ENCODE measurements at regions of chr3 and their contacts with region 1.

Region 1: GRCh38 chr3:196432137-196432879 is at the start of gene UBXN7:
- DNase-seq: peak; percentile 96 to 99
- ATAC-seq: peak; percentile 98
- H3K4me3 ChIP-seq: peak within 1 kb of the TSS; percentile 70 to 78
- H3K27ac ChIP-seq: peak within 1 kb of the TSS; percentile 60 to 69
- H3K4me1 ChIP-seq: no peaks in the 10 kb centered on the region
- H3K27me3 ChIP-seq: no peaks in the 10 kb centered on the region
- total RNA-seq, gene UBXN7: 40.4 to 57.1 TPM

Region 2: GRCh38 chr3:196388956-196389355 is 43.4 kb before region 1 on chr3:
- intact Hi-C with region 1: no loop called
- DNase-seq: no peak
- ATAC-seq: no peak
- H3K4me3 ChIP-seq: no peak overlapping the region
- H3K27ac ChIP-seq: no peak overlapping the region
- H3K4me1 ChIP-seq: no peaks in the 10 kb centered on the region
- H3K27me3 ChIP-seq: no peaks in the 10 kb centered on the region

Region 3: DNA sequence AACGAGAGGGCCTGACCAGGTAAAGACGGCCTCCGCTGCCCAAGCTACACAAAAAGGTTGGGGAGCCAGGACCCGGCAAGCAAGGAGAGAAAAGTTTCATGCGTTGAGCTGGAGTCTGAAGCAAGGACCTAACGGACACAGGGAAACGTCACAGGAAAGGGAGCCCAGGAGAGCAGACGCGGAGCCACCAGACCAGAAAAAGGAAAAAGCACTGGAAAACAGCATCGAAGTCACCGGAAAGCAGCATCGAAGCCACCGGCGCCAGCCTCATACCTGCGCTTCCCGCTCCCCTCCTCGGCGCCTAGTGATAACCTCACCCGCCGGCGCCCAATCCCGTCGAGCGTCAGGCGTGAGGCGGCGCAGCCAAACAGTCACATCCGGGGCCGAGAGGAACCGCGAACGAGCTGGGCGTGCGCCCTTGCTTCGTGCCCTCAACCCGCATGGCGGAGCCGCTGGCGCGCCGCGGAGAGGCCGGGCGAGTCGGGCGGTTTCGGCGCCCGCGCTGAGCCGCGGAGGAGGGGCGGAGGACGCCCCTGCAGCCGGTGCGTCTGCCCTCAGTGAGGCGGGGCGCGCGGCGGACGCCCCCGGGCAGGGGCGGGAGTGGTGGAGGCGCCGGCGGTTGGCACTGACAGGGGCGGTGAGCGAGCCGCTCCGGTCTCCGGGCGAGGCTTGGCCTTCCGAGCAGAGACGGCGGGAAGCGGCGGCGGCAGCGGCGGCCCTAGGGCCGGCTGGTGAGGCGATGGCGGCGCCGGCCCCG is 136.1 kb after region 1 on chr3 and contains the starts of genes FBXO45 and WDR53:
- intact Hi-C with region 1: loop called in 1 of 2 experiments (anchors 2 kb)
- DNase-seq: peak; percentile 98
- ATAC-seq: peak; percentile 99
- H3K4me3 ChIP-seq: peak within 1 kb of the TSS; percentile 76 to 79
- H3K27ac ChIP-seq: peak within 1 kb of the TSS in 1 of 2 donors; percentile 82
- H3K4me1 ChIP-seq: no peaks in the 10 kb centered on the region
- H3K27me3 ChIP-seq: no peaks in the 10 kb centered on the region
- total RNA-seq, gene FBXO45: 6.1 to 7.9 TPM
- total RNA-seq, gene WDR53: 11.0 to 11.4 TPM

Region 4: GRCh38 chr3:197137751-197138150 is 705.4 kb after region 1 on chr3:
- intact Hi-C with region 1: no loop called
- DNase-seq: peak in 1 of 2 donors; percentile 77
- ATAC-seq: no peak
- H3K4me3 ChIP-seq: no peak overlapping the region
- H3K27ac ChIP-seq: no peak overlapping the region
- H3K4me1 ChIP-seq: no peaks in the 10 kb centered on the region
- H3K27me3 ChIP-seq: no peaks in the 10 kb centered on the region

Measured in aorta (tissue), 5 donors.